A549 (cell line): ENCODE measurements at regions of chr9 and their contacts with region 1.

Region 1: GRCh38 chr9:132560616-132561202 is 21.7 kb upstream of the BARHL1 start:
- DNase-seq: no peak
- ATAC-seq: no peak; a peak in 1 of 6 replicates
- H3K4me3 ChIP-seq: no peak overlapping the region
- H3K27ac ChIP-seq: no peak overlapping the region
- H3K4me1 ChIP-seq: no peaks in the 10 kb centered on the region
- CTCF ChIP-seq: no peak
- EP300 ChIP-seq: no peak
- POLR2A ChIP-seq: no peak
- RAD21 ChIP-seq: no peak

Region 2: DNA sequence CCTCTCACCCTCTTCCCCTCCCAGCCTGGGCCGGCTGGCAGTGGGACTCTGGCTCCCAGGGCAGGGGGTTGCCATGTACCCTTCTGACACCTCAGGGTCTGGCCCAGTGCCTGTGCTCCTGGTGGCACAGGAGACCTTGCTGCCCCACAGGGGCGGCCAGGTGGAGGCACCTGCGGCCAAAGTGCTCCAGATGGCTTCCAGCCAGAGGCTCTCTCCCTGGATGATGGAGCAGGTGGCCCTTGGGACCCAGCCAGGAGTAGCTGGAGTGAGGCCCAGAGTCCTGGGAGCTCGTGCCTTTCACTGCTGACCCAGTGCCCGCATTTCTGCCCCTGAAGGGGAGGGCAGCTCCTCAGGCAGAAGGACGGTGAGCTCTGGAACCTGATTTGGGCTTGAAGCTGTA is 311.6 kb before region 1 on chr9:
- CTCF ChIA-PET with region 1: no interaction called
- POLR2A ChIA-PET with region 1: no interaction called
- DNase-seq: no peak
- ATAC-seq: no peak
- H3K4me3 ChIP-seq: no peak overlapping the region
- H3K27ac ChIP-seq: no peak overlapping the region
- H3K4me1 ChIP-seq: no peaks in the 10 kb centered on the region
- CTCF ChIP-seq: no peak
- EP300 ChIP-seq: no peak
- POLR2A ChIP-seq: no peak
- RAD21 ChIP-seq: no peak

Region 3: DNA sequence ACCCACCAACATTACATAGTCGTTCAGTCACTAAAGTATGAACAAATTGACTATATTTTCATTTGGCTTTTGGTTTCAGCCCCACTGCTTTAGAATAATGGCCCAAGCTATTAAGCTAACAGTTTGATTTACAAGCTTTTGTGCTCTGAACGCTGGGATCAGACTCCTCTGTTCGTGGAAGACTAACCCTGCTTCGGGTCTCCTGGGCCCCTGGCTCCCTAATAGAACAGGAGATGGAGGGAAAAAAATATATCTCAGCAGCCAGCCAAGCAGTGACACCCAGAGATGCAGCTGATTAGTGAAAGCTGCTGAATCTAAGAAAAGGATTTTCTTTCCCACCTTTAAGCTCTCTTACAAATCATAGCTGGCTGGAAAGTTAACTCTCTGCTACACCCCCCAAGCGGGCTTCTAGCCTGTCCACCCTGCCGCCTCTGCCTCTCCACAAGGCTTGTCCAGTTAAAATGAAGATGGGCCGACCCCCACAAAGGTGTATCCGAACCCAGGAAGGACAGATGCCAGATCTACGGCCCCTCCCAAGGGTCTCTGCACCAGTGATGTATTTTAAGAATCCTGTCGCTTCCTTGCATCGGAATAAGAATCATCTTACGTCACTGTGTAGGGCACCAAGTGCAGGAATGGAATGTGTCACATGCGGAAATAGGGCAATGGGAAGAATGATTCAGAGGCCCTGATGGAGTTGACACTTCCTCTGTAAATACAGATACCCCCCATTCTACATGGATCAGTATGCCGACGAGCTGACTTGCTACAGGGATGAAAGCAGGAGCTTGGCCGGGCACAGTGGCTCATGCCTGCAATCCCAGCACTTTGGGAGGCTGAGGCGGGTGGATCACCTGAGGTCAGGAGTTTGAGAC is 11.7 kb before region 1 on chr9:
- CTCF ChIA-PET with region 1: interaction called, 14 read pairs
- POLR2A ChIA-PET with region 1: no interaction called
- DNase-seq: no peak
- ATAC-seq: no peak
- H3K4me3 ChIP-seq: no peak overlapping the region
- H3K27ac ChIP-seq: no peak overlapping the region
- H3K4me1 ChIP-seq: 0 out of 3 replicates have a peak, but pooled peaks cover 3% of the 10 kb centered on the region
- CTCF ChIP-seq: no peak
- EP300 ChIP-seq: no peak
- POLR2A ChIP-seq: no peak
- RAD21 ChIP-seq: no peak

Region 4: DNA sequence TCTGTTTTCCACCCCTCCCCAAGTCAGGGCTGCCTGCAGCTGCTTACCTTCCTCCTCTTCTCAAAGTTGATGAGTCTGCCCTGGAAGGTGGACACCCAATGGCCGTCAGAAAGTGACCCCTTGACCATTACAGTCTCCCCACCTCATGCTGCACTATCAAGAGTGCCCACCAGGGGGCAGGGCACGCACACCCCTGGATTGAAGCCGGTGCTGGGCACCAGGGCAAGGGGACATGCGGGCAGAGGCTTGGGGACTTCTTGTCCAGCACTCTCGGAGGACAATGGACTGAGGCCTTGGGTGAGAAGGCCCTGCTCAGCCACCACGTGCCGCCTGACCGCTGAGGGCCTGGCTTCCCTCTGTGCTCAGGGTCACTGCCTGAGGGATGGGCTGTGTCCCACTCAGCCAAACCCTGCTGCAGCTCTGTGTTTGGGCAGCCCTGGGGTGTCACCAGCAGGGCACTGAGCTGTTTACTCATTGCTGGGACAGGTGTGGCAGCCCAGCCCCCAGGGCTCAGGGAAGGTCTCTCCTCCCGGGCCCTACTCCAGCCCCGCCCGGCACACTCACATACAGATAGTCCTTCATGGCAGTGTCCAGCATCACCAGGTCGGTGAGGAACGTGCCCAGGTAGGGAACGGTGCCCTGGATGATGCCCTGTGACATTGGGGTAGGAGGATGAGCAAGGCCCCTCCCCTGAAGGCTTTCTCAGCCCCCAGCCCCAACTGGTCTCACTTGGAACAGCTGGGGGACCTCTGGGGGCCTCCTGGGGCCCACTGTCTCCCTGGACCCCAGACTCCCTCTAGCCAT is 542.7 kb after region 1 on chr9:
- CTCF ChIA-PET with region 1: no interaction called
- POLR2A ChIA-PET with region 1: no interaction called
- DNase-seq: peak; percentile 53 to 72
- ATAC-seq: peak; percentile 72 to 90
- H3K4me3 ChIP-seq: no peak overlapping the region
- H3K27ac ChIP-seq: 0 out of 6 replicates have a peak overlapping the region, but pooled peaks of 1 of the 2 experiments have one; percentile 8
- H3K4me1 ChIP-seq: peaks cover 5% of the 10 kb centered on the region; the same call in 1 of the 3 replicates
- CTCF ChIP-seq: peak; percentile 96
- EP300 ChIP-seq: no peak
- POLR2A ChIP-seq: no peak
- RAD21 ChIP-seq: peak; percentile 95 to 97